ENCODE measurements at regions of chr12 and their contacts with region 1.

Region 1: GRCh38 chr12:25436203-25437030 is 116.7 kb downstream of the LMNTD1 start:
- DNase-seq: peak; percentile 75
- H3K4me3 ChIP-seq: no peak overlapping the region
- H3K27ac ChIP-seq: no peak overlapping the region
- H3K4me1 ChIP-seq: no peaks in the 10 kb centered on the region
- H3K27me3 ChIP-seq: no peaks in the 10 kb centered on the region
- CTCF ChIP-seq: peak; percentile 66 to 69
- POLR2A ChIP-seq: no peak

Region 2: DNA sequence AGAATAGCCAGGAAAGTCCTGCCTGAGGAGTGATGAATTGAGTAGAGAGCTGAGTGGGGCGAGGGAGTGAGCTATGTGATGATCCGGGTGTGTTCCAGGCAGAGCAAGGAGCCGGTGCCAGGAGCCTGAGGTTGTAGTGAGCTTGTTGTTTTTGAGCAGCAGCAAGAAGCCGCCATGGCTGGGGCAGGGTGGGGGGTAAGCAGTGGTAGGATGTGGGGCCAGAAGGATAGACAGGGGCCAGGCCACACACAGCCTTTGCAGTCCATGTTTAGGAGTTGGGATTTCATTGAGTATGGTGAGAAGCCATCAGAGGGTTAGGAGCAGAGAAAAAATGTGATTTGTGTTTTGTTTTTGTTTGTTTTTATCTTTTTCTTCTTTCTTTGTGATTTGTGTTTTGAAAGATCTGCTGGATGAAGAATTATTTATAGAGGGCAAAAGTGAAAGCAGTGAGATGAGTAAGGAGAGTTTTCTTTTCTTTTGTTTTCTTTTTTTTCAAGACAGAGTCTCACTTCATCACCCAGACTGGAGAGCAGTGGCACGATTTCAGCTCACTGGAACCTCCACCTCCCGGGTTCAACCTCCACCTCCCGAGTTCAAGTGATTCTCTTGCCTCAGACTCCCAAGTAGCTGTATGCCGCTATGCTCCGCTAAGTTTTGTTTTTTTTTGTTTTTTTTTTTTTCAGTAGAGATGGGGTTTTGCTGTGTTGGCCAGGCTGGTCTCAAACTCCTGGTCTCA is 395.2 kb before region 1 on chr12:
- CTCF ChIA-PET with region 1: no interaction called
- POLR2A ChIA-PET with region 1: no interaction called
- dilution Hi-C with region 1: no loop called
- intact Hi-C with region 1: no loop called
- DNase-seq: no peak
- H3K4me3 ChIP-seq: no peak overlapping the region
- H3K27ac ChIP-seq: no peak overlapping the region
- H3K4me1 ChIP-seq: no peaks in the 10 kb centered on the region
- H3K27me3 ChIP-seq: peaks cover 4 to 6% of the 10 kb centered on the region in 2 experiments
- CTCF ChIP-seq: no peak
- POLR2A ChIP-seq: no peak

Region 3: DNA sequence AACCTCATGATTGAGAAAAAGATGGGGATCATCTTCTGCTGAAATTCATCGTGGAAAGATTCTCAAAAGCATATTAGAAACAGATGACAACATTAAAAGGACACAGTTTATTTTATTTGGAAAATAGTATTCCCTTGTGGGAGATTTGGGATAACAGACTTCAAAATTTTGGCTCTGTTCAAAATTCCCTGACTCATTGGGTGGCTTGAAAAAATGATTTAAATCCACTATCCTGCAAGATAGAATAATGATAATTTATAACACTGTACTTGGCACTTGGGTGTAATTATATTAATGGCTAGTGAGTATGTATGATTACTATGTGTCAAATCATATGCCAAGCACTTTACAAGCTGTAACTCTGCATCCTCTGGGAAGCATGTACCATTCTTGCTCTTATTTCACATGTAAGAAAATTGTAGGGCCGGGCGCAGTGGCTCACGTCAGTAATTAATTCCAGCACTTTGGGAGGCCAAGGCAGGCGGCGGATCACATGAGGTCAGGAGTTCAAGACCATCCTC is 12.1 kb before region 1 on chr12:
- CTCF ChIA-PET with region 1: interaction called, 11 read pairs
- POLR2A ChIA-PET with region 1: no interaction called
- dilution Hi-C with region 1: no loop called
- intact Hi-C with region 1: no loop called
- DNase-seq: no peak
- H3K4me3 ChIP-seq: no peak overlapping the region
- H3K27ac ChIP-seq: no peak overlapping the region
- H3K4me1 ChIP-seq: no peaks in the 10 kb centered on the region
- H3K27me3 ChIP-seq: no peaks in the 10 kb centered on the region
- CTCF ChIP-seq: no peak
- POLR2A ChIP-seq: no peak

Region 4: GRCh38 chr12:25529738-25530137 is 93.3 kb after region 1 on chr12:
- CTCF ChIA-PET with region 1: no interaction called
- POLR2A ChIA-PET with region 1: no interaction called
- dilution Hi-C with region 1: no loop called
- intact Hi-C with region 1: no loop called
- DNase-seq: peak; percentile 64
- H3K4me3 ChIP-seq: no peak overlapping the region
- H3K27ac ChIP-seq: no peak overlapping the region
- H3K4me1 ChIP-seq: peaks cover 6% of the 10 kb centered on the region
- H3K27me3 ChIP-seq: no peaks in the 10 kb centered on the region
- CTCF ChIP-seq: no peak
- POLR2A ChIP-seq: no peak

Region 5: DNA sequence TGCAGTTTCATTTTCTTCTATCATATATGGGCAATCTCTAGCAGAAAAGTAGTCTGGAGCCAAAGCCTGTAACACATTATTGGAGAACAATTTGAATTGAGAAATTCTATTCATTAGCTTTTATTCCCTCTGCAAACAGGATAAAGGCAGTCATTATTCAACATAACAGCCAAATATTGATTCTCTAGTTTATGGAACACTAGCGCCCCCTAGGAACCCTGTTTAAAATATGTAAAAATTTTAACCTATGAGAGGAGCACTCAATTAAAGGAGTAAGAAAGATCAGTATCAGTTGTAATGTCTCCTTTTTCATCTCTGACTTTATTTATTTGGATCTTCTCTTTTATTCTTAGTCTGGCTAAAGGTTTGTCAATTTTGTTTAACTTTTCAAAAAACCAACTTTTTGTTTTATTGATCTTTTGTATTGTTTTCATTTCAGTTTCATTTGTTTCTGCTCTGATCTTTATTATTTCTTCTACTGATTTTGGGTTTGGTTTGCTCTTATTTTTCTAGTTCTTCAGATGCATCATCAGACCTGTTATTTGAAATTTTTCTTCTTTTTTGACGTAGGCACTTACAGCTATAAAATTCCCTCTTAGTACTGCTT is 121.5 kb after region 1 on chr12:
- CTCF ChIA-PET with region 1: interaction called, 23 read pairs
- POLR2A ChIA-PET with region 1: no interaction called
- dilution Hi-C with region 1: no loop called
- intact Hi-C with region 1: loop called (anchors 1 kb)
- DNase-seq: peak; percentile 42
- H3K4me3 ChIP-seq: no peak overlapping the region
- H3K27ac ChIP-seq: no peak overlapping the region
- H3K4me1 ChIP-seq: no peaks in the 10 kb centered on the region
- H3K27me3 ChIP-seq: no peaks in the 10 kb centered on the region
- CTCF ChIP-seq: peak; percentile 26 to 36
- POLR2A ChIP-seq: no peak

Region 6: DNA sequence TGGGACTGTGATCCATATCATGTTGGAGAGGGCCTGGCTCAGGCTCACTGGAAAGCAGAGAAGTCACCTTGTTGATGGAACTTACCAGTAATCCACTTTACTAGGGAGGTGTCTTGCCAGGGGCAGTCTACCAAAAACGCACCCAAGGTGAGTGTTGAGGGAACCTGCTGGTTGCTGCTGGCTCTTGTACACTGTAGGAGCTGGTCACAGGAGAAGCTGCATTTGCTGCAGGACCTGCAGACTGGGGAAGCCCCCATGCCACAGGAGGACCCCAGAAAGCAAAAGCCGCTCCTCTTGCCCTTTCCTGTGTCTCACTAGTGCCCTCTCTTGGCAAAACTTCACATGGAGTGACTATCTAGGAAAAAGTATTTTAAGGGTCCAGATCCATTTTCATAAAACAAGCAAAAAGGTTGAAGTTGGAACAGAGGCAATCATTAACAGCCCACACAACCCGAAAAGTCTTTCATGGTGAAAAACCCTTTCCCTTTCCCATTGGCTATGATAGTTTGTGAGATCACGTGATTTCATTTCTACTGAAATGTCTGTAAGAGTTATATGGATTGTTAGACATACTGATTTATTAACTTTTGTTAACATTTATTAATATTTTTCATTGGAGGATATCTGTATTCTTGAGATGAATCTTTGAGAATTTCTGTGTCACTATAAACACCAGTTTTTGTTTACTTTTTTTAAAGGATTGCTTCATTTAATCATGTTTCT is 581.2 kb after region 1 on chr12:
- CTCF ChIA-PET with region 1: interaction called, 34 read pairs
- POLR2A ChIA-PET with region 1: no interaction called
- dilution Hi-C with region 1: no loop called
- intact Hi-C with region 1: loop called (anchors 1 kb)
- DNase-seq: peak; percentile 69
- H3K4me3 ChIP-seq: no peak overlapping the region
- H3K27ac ChIP-seq: no peak overlapping the region
- H3K4me1 ChIP-seq: peaks cover 7% of the 10 kb centered on the region
- H3K27me3 ChIP-seq: no peaks in the 10 kb centered on the region
- CTCF ChIP-seq: peak; percentile 67
- POLR2A ChIP-seq: no peak

Region 7: DNA sequence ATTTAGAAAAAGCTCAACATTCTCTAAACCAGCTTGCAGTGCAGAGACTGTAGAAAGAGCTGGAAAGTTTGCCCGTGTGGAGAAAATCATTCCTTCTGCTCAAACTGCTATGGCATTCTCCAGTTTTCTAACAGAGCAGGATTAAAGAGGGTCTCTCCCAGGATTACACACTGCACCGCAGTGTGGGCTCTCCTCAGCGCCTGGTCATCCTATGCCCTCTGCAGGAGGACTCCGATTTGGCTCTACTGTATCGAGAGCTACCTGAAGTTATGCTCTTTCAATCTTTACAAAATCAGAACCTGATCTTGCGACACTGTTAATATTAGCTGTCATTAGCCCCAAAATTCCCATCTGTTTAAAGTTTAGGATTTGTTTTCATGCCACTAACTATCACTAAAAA is 655.4 kb after region 1 on chr12:
- CTCF ChIA-PET with region 1: interaction called, 13 read pairs
- POLR2A ChIA-PET with region 1: no interaction called
- dilution Hi-C with region 1: no loop called
- intact Hi-C with region 1: no loop called
- DNase-seq: no peak
- H3K4me3 ChIP-seq: no peak overlapping the region
- H3K27ac ChIP-seq: no peak overlapping the region
- H3K4me1 ChIP-seq: no peaks in the 10 kb centered on the region
- H3K27me3 ChIP-seq: no peaks in the 10 kb centered on the region
- CTCF ChIP-seq: peak in 1 of 2 donors; percentile 11
- POLR2A ChIP-seq: no peak